Ovary (tissue), 10 donors: ENCODE measurements at regions of chr1 and their contacts with region 1.

Region 1: GRCh38 chr1:47179017-47179987 is 10.5 kb downstream of the PDZK1IP1 start:
- DNase-seq: peak; percentile 72 to 90 (median 80)
- H3K4me3 ChIP-seq: peak overlapping the region; percentile 19
- H3K27ac ChIP-seq: no peak overlapping the region
- H3K4me1 ChIP-seq: no peaks in the 10 kb centered on the region
- H3K27me3 ChIP-seq: no peaks in the 10 kb centered on the region
- CTCF ChIP-seq: peak; percentile 47 to 74 (median 62)
- EP300 ChIP-seq: no peak
- POLR2A ChIP-seq: no peak

Region 2: DNA sequence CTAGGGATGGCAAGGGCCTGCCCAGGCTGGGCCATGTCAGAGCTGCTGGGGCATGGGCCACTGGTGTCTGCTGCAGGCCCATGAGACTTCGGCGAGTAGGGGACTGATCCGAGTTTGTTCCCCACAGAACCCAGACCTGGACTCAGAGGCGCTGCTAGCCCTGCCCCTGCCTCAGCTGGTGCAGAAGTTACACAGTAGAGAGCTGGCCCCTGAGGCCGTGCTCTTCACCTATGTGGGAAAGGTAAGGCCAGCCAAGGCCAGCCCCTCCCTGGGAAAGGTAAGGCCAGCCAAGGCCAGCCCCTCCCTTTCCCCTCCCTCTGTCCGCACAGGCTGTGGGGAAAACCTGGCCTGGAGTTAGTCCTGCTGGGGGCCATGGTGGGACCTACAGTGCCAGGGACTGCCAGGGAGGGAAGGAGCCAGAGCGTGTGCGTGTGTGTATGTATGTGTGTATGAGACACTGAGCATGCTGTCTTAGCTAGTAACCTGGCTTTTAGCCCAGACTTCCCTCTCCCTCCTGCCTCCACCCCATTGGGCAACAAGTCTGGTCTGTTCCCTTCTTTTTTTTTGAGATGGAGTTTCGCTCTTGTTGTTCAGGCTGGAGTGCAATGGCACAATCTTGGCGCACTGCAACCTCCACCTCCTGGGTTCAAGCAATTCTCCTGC is 777.2 kb before region 1 on chr1:
- intact Hi-C with region 1: loop called in 1 of 4 experiments (anchors 10 kb)
- DNase-seq: peak; percentile 51 to 68 (median 65)
- H3K4me3 ChIP-seq: no peak overlapping the region
- H3K27ac ChIP-seq: peak overlapping the region in 1 of 2 donors; percentile 40
- H3K4me1 ChIP-seq: peaks cover 3% of the 10 kb centered on the region
- H3K27me3 ChIP-seq: no peaks in the 10 kb centered on the region
- CTCF ChIP-seq: no peak
- EP300 ChIP-seq: no peak
- POLR2A ChIP-seq: no peak

Region 3: GRCh38 chr1:47378147-47378546 is 198.8 kb after region 1 on chr1:
- intact Hi-C with region 1: no loop called
- DNase-seq: no peak
- H3K4me3 ChIP-seq: no peak overlapping the region
- H3K27ac ChIP-seq: no peak overlapping the region
- H3K4me1 ChIP-seq: no peaks in the 10 kb centered on the region
- H3K27me3 ChIP-seq: no peaks in the 10 kb centered on the region
- CTCF ChIP-seq: no peak
- EP300 ChIP-seq: no peak
- POLR2A ChIP-seq: no peak